ENCODE measurements at regions of chr1 and their contacts with region 1.

Region 1: GRCh38 chr1:201999625-202000238 is 10.7 kb upstream of the ELF3 start:
- H3K4me3 ChIP-seq: no peak overlapping the region
- H3K27ac ChIP-seq: no peak overlapping the region
- H3K4me1 ChIP-seq: no peaks in the 10 kb centered on the region
- CTCF ChIP-seq: peak; percentile 53

Region 2: GRCh38 chr1:201946224-201946908 is 53.4 kb before region 1 on chr1 and contains the start of gene LMOD1:
- CTCF ChIA-PET with region 1: interaction called, 11 read pairs
- POLR2A ChIA-PET with region 1: no interaction called
- H3K4me3 ChIP-seq: peak within 1 kb of the TSS; percentile 47
- H3K27ac ChIP-seq: no peak within 1 kb of the TSS; the same call in 1 of the 2 replicates
- H3K4me1 ChIP-seq: no peaks in the 10 kb centered on the region
- CTCF ChIP-seq: 0 out of 2 replicates have a peak, but pooled peaks have one; percentile 17

Region 3: GRCh38 chr1:201964261-201964660 is 35.5 kb before region 1 on chr1:
- CTCF ChIA-PET with region 1: no interaction called
- POLR2A ChIA-PET with region 1: no interaction called
- H3K4me3 ChIP-seq: no peak overlapping the region
- H3K27ac ChIP-seq: no peak overlapping the region
- H3K4me1 ChIP-seq: no peaks in the 10 kb centered on the region
- CTCF ChIP-seq: no peak

Region 4: GRCh38 chr1:202023033-202023486 is 23.3 kb after region 1 on chr1:
- CTCF ChIA-PET with region 1: interaction called, 15 read pairs
- POLR2A ChIA-PET with region 1: interaction called, 13 read pairs
- H3K4me3 ChIP-seq: no peak overlapping the region
- H3K27ac ChIP-seq: no peak overlapping the region
- H3K4me1 ChIP-seq: peaks cover 14% of the 10 kb centered on the region
- CTCF ChIP-seq: no peak

Region 5: GRCh38 chr1:202112839-202113672 is 113.3 kb after region 1 on chr1:
- CTCF ChIA-PET with region 1: interaction called, 159 read pairs
- POLR2A ChIA-PET with region 1: interaction called, 4 read pairs
- H3K4me3 ChIP-seq: no peak overlapping the region
- H3K27ac ChIP-seq: no peak overlapping the region
- H3K4me1 ChIP-seq: no peaks in the 10 kb centered on the region
- CTCF ChIP-seq: no peak

Region 6: GRCh38 chr1:202135221-202135721 is 135.5 kb after region 1 on chr1:
- CTCF ChIA-PET with region 1: interaction called, 39 read pairs
- POLR2A ChIA-PET with region 1: no interaction called
- H3K4me3 ChIP-seq: no peak overlapping the region
- H3K27ac ChIP-seq: no peak overlapping the region
- H3K4me1 ChIP-seq: no peaks in the 10 kb centered on the region
- CTCF ChIP-seq: 0 out of 2 replicates have a peak, but pooled peaks have one; percentile 39

Measured in HEK293 (cell line).